ENCODE measurements at regions of chr11 and their contacts with region 1.

Region 1: DNA sequence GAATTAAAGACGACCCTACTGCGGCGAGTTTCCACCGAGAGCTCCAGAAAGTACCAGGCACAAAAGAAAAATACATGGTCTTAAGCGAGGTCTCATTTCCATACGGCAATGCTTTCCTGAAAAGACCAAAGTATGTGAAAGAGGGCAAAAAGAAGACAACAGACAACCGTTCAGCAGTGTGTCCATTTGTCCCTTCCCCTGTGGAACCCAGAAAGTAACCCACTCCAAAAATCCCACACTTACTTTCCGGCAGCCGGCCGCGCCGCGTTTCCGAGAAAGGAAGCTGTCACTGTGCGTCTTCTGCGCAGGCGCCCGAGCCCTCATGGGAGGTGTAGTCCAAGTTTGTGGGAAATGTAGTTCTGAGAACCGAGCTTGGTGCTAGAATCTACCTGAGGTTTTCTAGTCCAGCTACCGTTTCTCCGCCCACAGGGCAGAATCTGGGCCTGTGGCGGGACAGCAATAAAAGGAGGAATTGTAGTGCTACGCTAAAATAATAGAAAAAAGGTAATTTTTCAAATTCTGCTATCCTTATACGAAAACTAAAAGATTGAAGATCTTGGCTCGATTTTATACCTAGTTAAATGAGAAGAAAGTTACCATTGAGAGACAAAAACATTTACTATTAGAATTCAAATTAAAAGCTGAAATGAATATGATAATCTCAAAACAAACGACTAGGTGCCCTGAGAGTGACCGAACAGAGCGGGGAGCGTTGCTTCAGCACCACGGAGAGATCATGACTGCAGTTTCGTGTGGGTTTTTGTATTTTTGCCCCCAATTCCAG is at the start of gene PUS3:
- DNase-seq: peak; percentile 87
- ATAC-seq: peak; percentile 87
- H3K4me3 Mint-ChIP-seq: peak within 1 kb of the TSS; percentile 96
- H3K27ac Mint-ChIP-seq: peak within 1 kb of the TSS; percentile 93
- H3K4me1 Mint-ChIP-seq: peaks cover 10% of the 10 kb centered on the region
- H3K27me3 Mint-ChIP-seq: peaks cover 29% of the 10 kb centered on the region
- CTCF ChIP-seq: no peak
- total RNA-seq, gene PUS3: 16.3 to 18.8 TPM (median 18.6 TPM) in 3 replicates

Region 2: DNA sequence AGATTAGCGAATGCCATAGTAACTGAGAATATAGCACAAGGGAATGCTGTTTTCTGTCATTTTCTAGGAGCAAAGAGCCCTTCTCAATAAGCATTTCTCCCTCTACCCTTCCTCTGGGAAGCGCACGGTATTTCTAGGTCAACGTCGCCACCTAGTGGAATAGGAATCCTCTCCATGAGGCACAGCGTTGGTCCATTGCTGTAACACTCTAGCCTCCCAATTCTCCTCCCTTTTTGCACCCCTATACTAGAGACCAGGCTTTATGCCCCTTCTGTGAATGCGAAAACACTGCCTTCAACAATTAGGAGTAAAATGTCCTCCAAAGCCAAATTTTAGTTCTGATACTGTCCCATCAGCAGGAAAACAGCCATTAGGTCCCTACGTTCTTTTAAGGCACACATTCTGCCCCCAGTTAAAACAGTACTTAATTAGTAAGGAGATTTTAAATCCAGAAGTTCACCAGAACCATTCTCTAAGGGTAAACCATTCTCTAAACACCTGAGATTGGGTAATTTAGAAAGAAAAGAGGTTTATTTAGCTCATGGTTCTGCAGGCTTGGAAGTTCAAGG is 28.5 kb before region 1 on chr11:
- CTCF ChIA-PET with region 1: no interaction called
- POLR2A ChIA-PET with region 1: no interaction called
- DNase-seq: peak; percentile 70
- ATAC-seq: peak; percentile 94
- H3K4me3 Mint-ChIP-seq: peak overlapping the region; percentile 44
- H3K27ac Mint-ChIP-seq: no peak overlapping the region
- H3K4me1 Mint-ChIP-seq: peaks cover 7% of the 10 kb centered on the region
- H3K27me3 Mint-ChIP-seq: peaks cover 10% of the 10 kb centered on the region
- CTCF ChIP-seq: peak; percentile 56; the same call in 1 of the 2 replicates

Region 3: GRCh38 chr11:125887373-125888324 is 15.5 kb before region 1 on chr11 and contains the start of gene HYLS1:
- CTCF ChIA-PET with region 1: interaction called, 24 read pairs
- POLR2A ChIA-PET with region 1: interaction called, 16 read pairs
- DNase-seq: peak; percentile 92
- ATAC-seq: peak; percentile 94
- H3K4me3 Mint-ChIP-seq: peak within 1 kb of the TSS; percentile 76
- H3K27ac Mint-ChIP-seq: no peak within 1 kb of the TSS; the same call in 1 of the 2 replicates
- H3K4me1 Mint-ChIP-seq: peaks cover 3% of the 10 kb centered on the region; the same call in 1 of the 2 replicates
- H3K27me3 Mint-ChIP-seq: peaks cover 27% of the 10 kb centered on the region
- CTCF ChIP-seq: no peak
- total RNA-seq, gene HYLS1: 8.0 to 8.1 TPM (median 8.1 TPM) in 3 replicates

Measured in WTC11 (cell line).